GM10248 (cell line): ENCODE measurements at regions of chr6 and their contacts with region 1.

Region 1: GRCh38 chr6:73461537-73462350 is at the start of gene MTO1:
- DNase-seq: peak; percentile 89
- CTCF ChIP-seq: no peak

Region 2: GRCh38 chr6:73451223-73452107 is 10.3 kb before region 1 on chr6:
- CTCF ChIA-PET with region 1: interaction called, 18 read pairs
- POLR2A ChIA-PET with region 1: interaction called, 45 read pairs
- DNase-seq: peak; percentile 60
- CTCF ChIP-seq: peak; percentile 0

Region 3: DNA sequence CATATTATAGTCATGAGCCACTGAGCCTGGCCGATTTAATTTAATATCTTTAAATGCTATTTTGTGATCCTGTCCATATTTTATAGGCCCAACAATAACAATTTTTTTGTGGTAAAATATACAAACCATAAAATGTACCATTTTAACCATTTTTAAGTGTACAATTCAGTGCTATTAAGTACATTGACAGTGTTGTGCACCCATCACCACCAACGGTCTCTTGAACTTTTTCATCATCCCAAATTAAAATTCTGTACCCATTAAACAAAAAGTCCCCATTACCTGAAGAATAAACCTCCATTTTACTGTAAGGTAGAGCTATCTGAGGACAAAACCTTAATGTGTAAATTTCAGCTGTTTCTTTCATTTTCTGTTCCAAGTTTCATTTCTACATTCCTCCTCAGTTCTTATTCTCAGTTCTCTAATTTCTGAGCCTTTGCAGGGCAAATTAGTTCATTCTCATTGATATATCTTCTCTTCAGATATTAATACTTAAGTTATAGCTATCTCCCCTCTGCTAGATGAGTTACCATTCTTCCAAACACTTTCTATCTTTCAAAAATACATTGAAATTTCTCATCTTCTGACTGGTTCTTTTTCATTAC is 10.0 kb after region 1 on chr6:
- CTCF ChIA-PET with region 1: interaction called, 4 read pairs
- POLR2A ChIA-PET with region 1: interaction called, 11 read pairs
- DNase-seq: peak; percentile 59
- CTCF ChIP-seq: no peak

Region 4: DNA sequence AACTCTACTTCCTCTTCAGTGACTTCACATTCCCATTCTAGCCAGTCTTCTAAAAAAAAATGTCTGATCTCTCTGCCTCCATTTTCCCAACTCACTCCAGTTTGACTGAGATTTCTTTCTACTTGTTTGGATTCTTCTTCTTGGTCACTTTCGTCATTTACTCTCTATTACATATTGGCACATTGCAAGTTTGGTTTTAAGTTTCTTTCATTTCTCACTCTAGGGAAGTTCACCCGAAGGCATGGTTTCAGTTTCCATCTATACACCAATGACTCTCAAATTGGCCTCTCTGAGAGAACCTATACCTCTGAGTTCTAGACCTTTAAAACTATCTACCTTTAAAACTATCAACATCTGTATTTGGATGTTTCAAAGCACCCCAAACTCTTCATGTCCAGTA is 285.5 kb after region 1 on chr6:
- CTCF ChIA-PET with region 1: no interaction called
- POLR2A ChIA-PET with region 1: no interaction called
- DNase-seq: peak; percentile 52
- CTCF ChIP-seq: no peak